PC-9 (cell line): ENCODE measurements at regions of chr20 and their contacts with region 1.

Region 1: DNA sequence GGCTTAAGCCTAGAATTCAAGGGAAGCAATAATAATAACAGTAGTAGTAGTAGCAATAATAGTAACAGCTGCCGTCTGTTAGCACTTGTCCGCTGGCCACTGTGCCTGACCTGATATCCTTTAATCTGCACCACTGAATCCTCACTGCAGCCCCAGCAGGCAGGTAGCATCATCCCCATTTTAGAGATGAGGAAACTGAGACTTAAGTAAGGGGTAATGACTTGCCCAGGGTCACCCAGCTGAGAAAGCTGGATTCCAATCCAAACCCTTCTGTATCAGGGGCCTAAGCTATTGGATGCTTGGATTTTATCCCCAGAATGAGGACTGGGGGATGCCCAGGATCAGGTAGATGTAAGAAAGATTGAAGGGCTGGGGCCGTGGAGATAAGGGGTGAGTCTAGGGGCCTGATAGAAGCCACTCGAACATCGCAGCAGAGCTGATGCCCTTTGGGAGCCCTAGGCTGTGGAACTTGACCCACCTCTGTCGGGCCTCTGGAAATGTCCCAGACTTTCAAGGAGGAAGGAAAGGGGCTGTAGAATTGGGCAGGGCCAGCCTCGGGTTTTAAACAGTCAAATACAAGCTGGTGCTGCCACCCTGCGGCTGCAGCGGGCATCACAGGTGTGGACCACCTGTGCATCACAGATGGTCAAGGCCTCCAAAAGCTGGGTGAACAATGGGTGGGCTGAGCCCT is 102.1 kb upstream of the MYL9 start:
- DNase-seq: peak in 1 of 2 experiments; percentile 76
- H3K4me3 ChIP-seq: no peak overlapping the region
- H3K27ac ChIP-seq: no peak overlapping the region
- H3K4me1 ChIP-seq: no peaks in the 10 kb centered on the region
- H3K27me3 ChIP-seq: no peaks in the 10 kb centered on the region
- CTCF ChIP-seq: peak; percentile 95

Region 2: GRCh38 chr20:35828434-35828833 is 610.8 kb before region 1 on chr20:
- CTCF ChIA-PET with region 1: no interaction called
- POLR2A ChIA-PET with region 1: no interaction called
- intact Hi-C with region 1: no loop called
- DNase-seq: no peak
- H3K4me3 ChIP-seq: no peak overlapping the region
- H3K27ac ChIP-seq: no peak overlapping the region
- H3K4me1 ChIP-seq: no peaks in the 10 kb centered on the region
- H3K27me3 ChIP-seq: no peaks in the 10 kb centered on the region
- CTCF ChIP-seq: no peak

Region 3: GRCh38 chr20:36214684-36215256 is 224.4 kb before region 1 on chr20:
- CTCF ChIA-PET with region 1: no interaction called
- POLR2A ChIA-PET with region 1: no interaction called
- intact Hi-C with region 1: loop called (anchors 2 kb)
- DNase-seq: no peak
- H3K4me3 ChIP-seq: no peak overlapping the region
- H3K27ac ChIP-seq: no peak overlapping the region
- H3K4me1 ChIP-seq: no peaks in the 10 kb centered on the region
- H3K27me3 ChIP-seq: no peaks in the 10 kb centered on the region
- CTCF ChIP-seq: peak; percentile 72

Region 4: GRCh38 chr20:36273414-36274180 is 165.6 kb before region 1 on chr20:
- CTCF ChIA-PET with region 1: interaction called, 3 read pairs
- POLR2A ChIA-PET with region 1: no interaction called
- intact Hi-C with region 1: loop called (anchors 1 kb)
- DNase-seq: peak in 1 of 2 experiments; percentile 15
- H3K4me3 ChIP-seq: no peak overlapping the region
- H3K27ac ChIP-seq: no peak overlapping the region
- H3K4me1 ChIP-seq: no peaks in the 10 kb centered on the region
- H3K27me3 ChIP-seq: peaks cover 32% of the 10 kb centered on the region
- CTCF ChIP-seq: peak; percentile 57

Region 5: DNA sequence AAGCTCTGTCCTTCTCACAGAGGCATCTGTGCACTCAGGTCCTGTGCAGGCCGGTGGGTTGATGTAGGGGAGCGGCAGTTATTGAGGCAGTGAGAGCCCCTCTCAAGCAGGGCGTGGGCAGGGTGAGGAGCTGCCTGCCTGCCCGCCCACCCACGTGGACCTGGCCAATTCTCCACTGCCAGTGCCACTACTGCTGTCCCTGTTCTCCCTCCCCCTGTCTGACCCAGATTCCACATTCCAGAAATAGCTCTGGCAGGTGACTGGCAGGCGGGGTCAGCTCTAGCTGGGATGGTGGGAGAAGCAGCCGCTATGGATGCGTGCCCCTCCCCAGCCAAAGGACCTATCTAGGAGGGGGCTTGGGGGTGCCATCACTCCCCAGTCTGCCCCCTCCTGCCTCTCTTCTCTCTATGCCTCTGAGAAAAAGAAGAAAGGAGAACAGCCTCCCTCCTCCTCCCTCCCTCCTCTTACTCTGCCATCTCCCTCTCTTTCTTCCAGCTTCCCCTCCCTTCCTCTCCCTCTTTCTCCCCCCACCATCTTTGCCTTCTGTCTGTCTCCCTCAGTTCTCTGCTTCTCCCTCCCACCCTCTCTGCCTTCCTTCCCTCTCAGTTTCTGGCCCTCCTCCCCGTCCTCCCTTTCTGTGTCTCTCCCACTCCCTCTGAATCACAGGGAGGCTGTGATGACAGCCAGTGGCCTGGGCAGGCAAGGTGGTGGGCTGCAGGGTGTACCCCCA is 15.7 kb after region 1 on chr20:
- CTCF ChIA-PET with region 1: interaction called, 13 read pairs
- POLR2A ChIA-PET with region 1: no interaction called
- intact Hi-C with region 1: no loop called
- DNase-seq: peak in 1 of 2 experiments; percentile 58
- H3K4me3 ChIP-seq: no peak overlapping the region
- H3K27ac ChIP-seq: no peak overlapping the region
- H3K4me1 ChIP-seq: peaks cover 7% of the 10 kb centered on the region
- H3K27me3 ChIP-seq: no peaks in the 10 kb centered on the region
- CTCF ChIP-seq: no peak

Region 6: GRCh38 chr20:36471885-36472636 is 32.9 kb after region 1 on chr20:
- CTCF ChIA-PET with region 1: interaction called, 11 read pairs
- POLR2A ChIA-PET with region 1: no interaction called
- intact Hi-C with region 1: no loop called
- DNase-seq: no peak
- H3K4me3 ChIP-seq: no peak overlapping the region
- H3K27ac ChIP-seq: no peak overlapping the region
- H3K4me1 ChIP-seq: peaks cover 12% of the 10 kb centered on the region; the same call in 1 of the 2 replicates
- H3K27me3 ChIP-seq: no peaks in the 10 kb centered on the region
- CTCF ChIP-seq: no peak